IMR-90 (cell line): ENCODE measurements at regions of chr3 and their contacts with region 1.

Region 1: DNA sequence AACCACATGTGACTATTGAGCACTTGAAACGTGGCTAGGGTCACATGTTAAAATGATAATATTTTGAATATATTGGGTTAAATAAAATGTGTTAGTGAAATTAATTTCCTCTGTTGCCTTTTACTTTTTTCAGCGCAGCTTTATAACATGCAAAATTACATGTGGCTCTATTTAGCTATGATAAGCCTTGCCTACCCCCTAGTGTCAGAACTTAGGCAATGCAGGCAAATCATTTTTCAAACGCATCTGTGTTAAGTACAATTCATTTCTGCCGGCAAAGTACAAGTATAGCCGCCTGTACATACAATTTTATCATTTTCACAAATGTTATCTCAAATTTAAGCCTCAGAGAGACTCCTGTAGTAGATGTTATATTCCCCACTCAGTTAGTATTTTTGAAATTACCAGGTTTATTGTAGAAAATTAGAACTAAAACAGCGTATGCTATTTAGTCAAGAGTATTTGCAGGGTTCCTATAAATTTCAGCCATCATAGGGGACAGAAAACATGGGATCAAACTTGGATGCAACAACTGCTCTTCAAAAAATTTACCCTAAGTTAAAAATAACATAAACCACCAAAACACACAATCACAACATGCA is 56.1 kb downstream of the TAFA4 start:
- DNase-seq: peak; percentile 74
- ATAC-seq: peak; percentile 96
- H3K4me3 ChIP-seq: no peak overlapping the region
- H3K27ac ChIP-seq: no peak overlapping the region
- H3K4me1 ChIP-seq: no peaks in the 10 kb centered on the region
- H3K27me3 ChIP-seq: peaks cover 3% of the 10 kb centered on the region; the same call in 1 of the 2 replicates
- CTCF ChIP-seq: peak; percentile 92
- POLR2A ChIP-seq: no peak
- RAD21 ChIP-seq: peak; percentile 86

Region 2: DNA sequence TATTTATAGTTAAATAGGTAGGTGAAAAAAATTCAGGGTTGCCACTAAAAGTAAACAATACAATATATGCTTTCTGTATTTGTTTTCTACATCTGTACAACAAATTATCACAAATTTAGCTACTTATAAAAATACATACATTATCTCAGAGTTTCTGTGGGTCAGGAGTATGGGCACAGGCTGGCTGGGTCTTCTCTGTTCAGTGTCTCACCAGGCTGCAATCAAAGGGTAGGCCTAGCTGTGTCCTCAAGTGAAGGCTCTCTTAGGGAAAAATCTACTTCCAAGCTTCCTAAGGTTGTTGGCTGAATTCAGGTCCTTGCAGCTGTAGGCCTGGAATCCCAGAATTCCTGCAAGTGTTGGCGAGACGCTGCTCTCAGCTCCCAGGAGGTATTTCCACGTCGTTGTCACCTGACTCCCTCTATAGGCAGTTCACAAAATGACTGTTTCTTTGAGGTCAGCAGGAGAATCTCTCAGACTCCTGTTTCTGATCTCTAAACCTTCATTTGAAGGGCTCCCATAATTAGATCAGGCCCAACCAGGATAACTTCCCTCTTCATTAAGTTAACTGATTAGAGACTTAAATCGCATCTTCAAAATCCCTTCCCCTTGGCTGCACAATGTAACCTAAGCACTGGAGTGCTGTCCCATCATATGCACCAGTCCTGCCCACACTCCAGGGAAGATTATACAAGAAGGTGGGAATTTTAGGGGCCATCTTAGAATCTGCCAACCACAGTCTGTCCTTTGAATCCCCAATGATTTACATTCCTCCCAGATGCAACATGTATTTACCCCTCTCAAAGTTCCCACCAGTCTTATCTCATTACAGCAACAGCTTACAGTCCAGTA is 1518.4 kb before region 1 on chr3:
- CTCF ChIA-PET with region 1: no interaction called
- POLR2A ChIA-PET with region 1: no interaction called
- dilution Hi-C with region 1: no loop called
- in situ Hi-C with region 1: loop called (anchors 25 kb)
- intact Hi-C with region 1: no loop called
- DNase-seq: peak; percentile 35
- ATAC-seq: peak; percentile 79
- H3K4me3 ChIP-seq: no peak overlapping the region
- H3K27ac ChIP-seq: no peak overlapping the region
- H3K4me1 ChIP-seq: no peaks in the 10 kb centered on the region
- H3K27me3 ChIP-seq: no peaks in the 10 kb centered on the region
- CTCF ChIP-seq: peak; percentile 39
- POLR2A ChIP-seq: no peak
- RAD21 ChIP-seq: peak; percentile 30; the same call in 1 of the 2 replicates

Region 3: GRCh38 chr3:68988740-68989139 is 112.5 kb after region 1 on chr3:
- CTCF ChIA-PET with region 1: no interaction called
- POLR2A ChIA-PET with region 1: no interaction called
- dilution Hi-C with region 1: no loop called
- in situ Hi-C with region 1: no loop called
- intact Hi-C with region 1: no loop called
- DNase-seq: peak; percentile 95
- ATAC-seq: peak; percentile 76
- H3K4me3 ChIP-seq: no peak overlapping the region
- H3K27ac ChIP-seq: peak overlapping the region; percentile 17; the same call in 1 of the 2 replicates
- H3K4me1 ChIP-seq: peaks cover 2% of the 10 kb centered on the region; the same call in 1 of the 2 replicates
- H3K27me3 ChIP-seq: no peaks in the 10 kb centered on the region
- CTCF ChIP-seq: no peak
- POLR2A ChIP-seq: no peak
- RAD21 ChIP-seq: no peak